Activated CD4-positive, alpha-beta memory T cell treated with anti-CD3 and anti-CD28 coated beads for 36 hours (primary cell): ENCODE measurements at regions of chr2 and their contacts with region 1.

Region 1: GRCh38 chr2:72973566-72974435 is 56.5 kb downstream of the EMX1 start:
- DNase-seq: peak; percentile 50
- H3K4me3 Mint-ChIP-seq: no peak overlapping the region
- H3K27ac Mint-ChIP-seq: no peak overlapping the region
- H3K4me1 Mint-ChIP-seq: no peaks in the 10 kb centered on the region
- H3K27me3 Mint-ChIP-seq: no peaks in the 10 kb centered on the region

Region 2: GRCh38 chr2:72953976-72954375 is 19.8 kb before region 1 on chr2:
- CTCF ChIA-PET with region 1: interaction called, 10 read pairs
- POLR2A ChIA-PET with region 1: no interaction called
- intact Hi-C with region 1: no loop called
- DNase-seq: peak; percentile 35
- H3K4me3 Mint-ChIP-seq: no peak overlapping the region
- H3K27ac Mint-ChIP-seq: no peak overlapping the region
- H3K4me1 Mint-ChIP-seq: peaks cover 9% of the 10 kb centered on the region
- H3K27me3 Mint-ChIP-seq: no peaks in the 10 kb centered on the region

Region 3: DNA sequence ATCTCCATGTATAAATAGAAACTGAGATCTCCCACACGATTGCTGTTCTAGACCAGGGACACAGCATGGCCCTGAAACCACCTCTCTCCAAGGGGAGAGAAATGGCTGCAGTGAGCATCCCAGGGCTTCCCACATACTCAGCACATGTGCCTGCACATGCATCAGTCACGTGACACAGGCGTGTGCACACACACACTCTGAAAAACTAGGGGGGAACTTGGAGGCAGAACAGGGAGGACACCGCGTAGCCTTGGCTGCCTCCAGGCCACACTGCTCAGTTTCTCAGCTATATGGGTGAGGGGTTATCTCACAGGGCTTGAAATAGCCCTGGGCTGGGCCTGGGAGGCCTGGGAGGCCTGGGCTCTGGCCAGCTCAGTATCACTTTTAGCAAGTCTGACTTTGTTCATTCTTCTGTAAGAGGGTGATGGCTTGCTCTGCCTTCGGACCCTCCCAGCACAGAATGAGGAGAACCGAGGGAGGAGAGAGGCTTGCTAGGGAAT is 10.4 kb after region 1 on chr2:
- CTCF ChIA-PET with region 1: interaction called, 12 read pairs
- POLR2A ChIA-PET with region 1: no interaction called
- intact Hi-C with region 1: no loop called
- DNase-seq: no peak
- H3K4me3 Mint-ChIP-seq: no peak overlapping the region
- H3K27ac Mint-ChIP-seq: no peak overlapping the region
- H3K4me1 Mint-ChIP-seq: no peaks in the 10 kb centered on the region
- H3K27me3 Mint-ChIP-seq: no peaks in the 10 kb centered on the region